ENCODE measurements at regions of chr12 and their contacts with region 1.

Region 1: DNA sequence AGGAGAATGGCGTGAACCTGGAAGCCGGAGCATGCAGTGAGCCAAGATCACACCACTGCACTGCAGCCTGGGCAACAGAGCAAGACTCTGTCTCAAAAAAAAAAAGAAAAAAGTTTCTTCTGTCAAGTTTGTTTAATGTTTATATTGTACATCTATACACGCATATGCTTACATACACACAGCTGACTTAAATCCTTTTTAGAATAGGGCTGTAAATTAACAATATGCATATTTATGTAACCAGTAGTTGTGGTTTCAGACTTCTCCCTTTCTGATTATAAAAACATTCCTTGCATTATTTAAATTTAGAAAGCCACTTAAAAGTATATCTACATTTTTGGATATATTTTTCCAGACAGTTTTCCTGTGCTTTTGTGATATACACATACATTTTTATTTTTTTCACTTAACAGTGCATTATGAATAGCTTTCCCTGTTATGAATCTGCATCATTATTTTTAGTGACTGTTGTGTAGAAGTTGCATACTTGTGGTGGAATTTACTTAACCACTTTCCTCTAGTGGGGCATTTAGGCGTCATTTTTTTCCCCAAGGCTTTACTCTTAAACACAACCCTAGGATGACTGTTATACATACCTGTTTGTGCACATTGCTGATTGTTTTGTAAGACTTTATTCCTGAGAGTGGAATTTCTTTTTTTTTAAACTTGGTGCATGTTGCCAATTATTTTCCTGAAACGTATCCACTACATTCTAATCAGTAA is 29.4 kb downstream of the POLR3B start:
- DNase-seq: no peak
- ATAC-seq: no peak

Region 2: GRCh38 chr12:106594447-106594846 is 207.5 kb after region 1 on chr12:
- intact Hi-C with region 1: no loop called
- DNase-seq: no peak
- ATAC-seq: no peak

Region 3: DNA sequence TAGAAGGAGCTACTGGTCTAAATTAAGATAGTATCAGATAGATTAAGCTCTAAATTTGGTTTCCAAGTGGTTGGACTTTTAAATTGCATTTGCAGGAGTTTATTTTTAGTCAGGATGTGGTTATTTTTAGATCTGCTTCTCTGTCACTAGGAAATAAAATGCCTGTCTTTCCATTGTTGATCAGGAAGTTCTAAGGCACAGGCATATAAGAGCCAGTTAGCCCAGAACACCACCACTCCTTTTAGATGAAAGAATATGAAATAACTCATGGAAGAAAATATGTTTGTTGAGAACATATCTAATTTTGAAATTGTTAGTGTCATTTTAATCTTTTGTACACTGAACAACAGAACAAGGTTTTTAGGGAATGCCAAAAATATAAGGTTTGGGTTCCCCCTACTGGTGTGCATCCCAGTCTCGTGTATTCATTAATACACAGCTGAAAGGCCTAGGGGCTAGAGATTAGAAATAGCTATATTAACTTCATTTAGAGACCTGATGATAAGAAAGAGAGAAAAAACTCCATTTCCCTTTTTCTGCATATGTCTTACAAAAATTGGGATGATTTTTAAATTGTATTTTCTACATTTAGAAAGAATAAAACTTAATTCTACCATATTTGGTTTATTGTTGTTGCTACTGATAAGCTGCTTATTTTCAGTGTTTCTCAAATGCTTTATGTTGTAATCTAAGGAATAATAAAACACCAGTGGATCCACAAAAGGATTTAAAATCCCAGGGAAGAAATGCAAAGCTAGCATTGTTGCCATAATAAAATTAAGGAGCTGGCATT is 454.7 kb after region 1 on chr12:
- intact Hi-C with region 1: loop called in 1 of 2 experiments (anchors 10 kb)
- DNase-seq: peak in 1 of 2 donors; percentile 41
- ATAC-seq: peak; percentile 73

Region 4: DNA sequence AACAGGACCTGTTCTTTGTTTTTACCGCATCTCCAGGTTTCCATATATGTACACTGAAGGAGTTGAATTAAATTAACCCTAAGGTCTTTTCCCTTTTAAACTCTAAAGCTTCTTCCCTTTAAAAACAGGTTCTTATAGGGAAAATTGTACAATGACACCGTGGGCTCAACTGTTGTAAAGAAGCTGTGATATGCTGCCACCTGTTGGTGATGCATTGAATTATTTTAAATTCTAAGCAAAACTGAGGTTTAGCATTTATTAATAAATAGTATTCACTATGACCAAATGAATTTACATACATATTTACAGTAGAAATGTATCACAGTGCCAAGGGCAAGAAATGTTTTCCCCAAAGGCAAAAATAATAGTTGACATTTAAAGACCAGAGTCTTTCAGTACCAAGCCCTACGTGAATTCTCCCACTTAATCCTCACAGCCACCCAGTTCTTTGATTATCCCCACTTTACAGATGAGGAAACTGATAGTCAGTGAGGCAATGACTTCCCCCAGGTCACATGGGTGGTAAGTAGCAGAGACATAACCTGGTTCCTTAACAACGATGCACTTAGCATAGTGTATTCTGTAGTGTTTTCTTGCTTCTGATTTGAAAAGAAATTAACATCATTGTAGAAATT is 533.1 kb after region 1 on chr12:
- intact Hi-C with region 1: loop called (anchors 2 to 10 kb)
- DNase-seq: no peak
- ATAC-seq: peak; percentile 47

Measured in left colon (tissue), 2 donors.